HepG2 (cell line): ENCODE measurements at regions of chr15 and their contacts with region 1.

Region 1: DNA sequence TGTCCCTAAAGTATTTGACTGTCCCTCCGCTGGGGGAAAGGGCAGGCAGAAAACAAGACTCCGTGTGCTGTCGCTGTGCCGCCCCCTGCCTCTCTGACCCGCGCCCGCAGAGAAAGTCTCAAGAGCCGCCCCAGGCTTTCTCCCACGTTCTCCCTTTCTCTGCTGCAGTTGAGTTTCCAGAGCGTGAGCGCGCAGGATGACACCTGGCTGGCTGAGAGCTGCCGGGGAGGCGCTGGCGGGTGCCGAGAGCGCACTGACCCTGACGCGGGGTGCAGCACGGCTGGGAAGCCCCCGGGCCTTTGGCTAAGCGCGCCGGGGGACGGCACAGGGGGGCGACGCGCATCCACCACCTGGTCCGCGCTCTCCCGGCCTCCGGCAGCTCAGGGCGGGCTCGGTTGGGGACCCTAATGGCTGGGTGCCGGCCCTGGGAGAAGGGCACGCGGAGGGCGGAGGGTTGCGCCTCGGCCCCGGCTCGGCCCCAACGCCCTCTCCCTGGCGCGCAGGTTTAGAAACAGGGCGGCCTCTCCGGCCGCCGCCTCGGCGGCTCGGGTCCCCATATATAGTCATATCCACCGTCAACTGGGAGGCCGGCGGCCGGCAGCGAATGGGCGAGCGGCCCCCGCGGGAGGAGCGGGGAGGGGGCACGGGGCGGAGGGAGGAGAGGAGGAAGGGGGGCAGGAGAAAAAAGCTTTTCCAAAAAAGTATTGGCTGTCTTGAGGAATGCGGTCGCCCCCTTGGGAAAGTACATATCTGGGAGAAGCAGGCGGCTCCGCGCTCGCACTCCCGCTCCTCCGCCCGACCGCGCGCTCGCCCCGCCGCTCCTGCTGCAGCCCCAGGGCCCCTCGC is at the start of gene TPM1:
- DNase-seq: peak; percentile 73
- ATAC-seq: peak; percentile 89
- H3K4me3 ChIP-seq: peak within 1 kb of the TSS; percentile 80 to 92 (median 89)
- H3K27ac ChIP-seq: peak within 1 kb of the TSS; percentile 49
- H3K4me1 ChIP-seq: peaks cover 50% of the 10 kb centered on the region
- H3K27me3 ChIP-seq: no peaks in the 10 kb centered on the region
- CTCF ChIP-seq: peak; percentile 52
- EP300 ChIP-seq: no peak
- POLR2A ChIP-seq: peak; percentile 0 to 66; a peak in 2 of 4 replicates
- RAD21 ChIP-seq: no peak
- total RNA-seq, gene TPM1: 98.9 and 113 TPM in 2 replicates

Region 2: DNA sequence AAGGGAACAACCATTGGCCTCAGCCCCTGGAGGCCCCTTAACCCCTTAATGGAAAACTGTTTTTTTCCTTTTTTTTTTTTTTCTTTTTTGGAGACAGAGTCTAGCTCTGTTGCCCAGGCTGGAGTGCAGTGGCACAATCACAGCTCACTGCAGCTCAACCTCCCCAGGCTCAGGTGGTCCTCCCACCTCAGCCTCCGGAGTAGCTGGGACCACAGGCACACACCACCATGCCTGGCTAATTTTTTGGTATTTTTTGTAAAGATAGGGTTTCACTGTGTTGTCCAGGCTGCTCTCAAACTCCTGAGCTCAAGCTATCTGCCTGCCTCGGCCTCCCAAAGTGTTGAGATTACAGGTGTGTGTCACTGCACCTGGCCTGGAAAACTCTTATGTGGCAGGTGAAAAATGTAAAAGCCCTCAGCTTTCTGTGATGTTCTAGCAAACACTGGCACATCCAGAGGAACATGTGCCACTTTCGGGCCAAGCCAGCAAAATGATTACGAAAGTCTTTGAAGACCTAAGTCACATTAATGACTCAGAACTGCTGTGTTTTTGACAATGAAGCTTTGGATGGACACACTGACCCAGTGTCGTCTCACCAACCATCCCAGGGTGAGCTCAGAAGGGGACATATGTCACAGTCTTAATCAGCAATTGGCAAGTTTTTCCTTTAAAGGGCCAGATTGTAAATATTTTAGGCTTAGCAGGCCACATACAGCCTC is 188.9 kb before region 1 on chr15:
- CTCF ChIA-PET with region 1: no interaction called
- POLR2A ChIA-PET with region 1: interaction called, 4 read pairs
- in situ Hi-C with region 1: loop called (anchors 5 kb)
- intact Hi-C with region 1: loop called (anchors 2 kb)
- DNase-seq: peak; percentile 80
- ATAC-seq: peak; percentile 29; the same call in 1 of the 3 replicates
- H3K4me3 ChIP-seq: no peak overlapping the region
- H3K27ac ChIP-seq: no peak overlapping the region
- H3K4me1 ChIP-seq: peaks cover 79% of the 10 kb centered on the region
- H3K27me3 ChIP-seq: no peaks in the 10 kb centered on the region
- CTCF ChIP-seq: no peak
- EP300 ChIP-seq: no peak
- POLR2A ChIP-seq: no peak
- RAD21 ChIP-seq: no peak